ENCODE measurements at regions of chr22 and their contacts with region 1.

Region 1: GRCh38 chr22:37472418-37473006 is 13.7 kb downstream of the MFNG start:
- DNase-seq: peak; percentile 48
- ATAC-seq: no peak
- H3K4me3 Mint-ChIP-seq: no peak overlapping the region
- H3K27ac Mint-ChIP-seq: peak overlapping the region; percentile 42
- H3K4me1 Mint-ChIP-seq: peaks cover 5% of the 10 kb centered on the region
- H3K27me3 Mint-ChIP-seq: no peaks in the 10 kb centered on the region
- CTCF ChIP-seq: peak; percentile 70

Region 2: GRCh38 chr22:37353839-37354238 is 118.7 kb before region 1 on chr22:
- CTCF ChIA-PET with region 1: no interaction called
- POLR2A ChIA-PET with region 1: no interaction called
- intact Hi-C with region 1: no loop called
- DNase-seq: no peak
- ATAC-seq: no peak
- H3K4me3 Mint-ChIP-seq: no peak overlapping the region
- H3K27ac Mint-ChIP-seq: no peak overlapping the region
- H3K4me1 Mint-ChIP-seq: no peaks in the 10 kb centered on the region
- H3K27me3 Mint-ChIP-seq: no peaks in the 10 kb centered on the region
- CTCF ChIP-seq: no peak

Region 3: GRCh38 chr22:37486224-37486845 is 13.8 kb after region 1 on chr22 and contains the start of gene MFNG:
- CTCF ChIA-PET with region 1: interaction called, 20 read pairs
- POLR2A ChIA-PET with region 1: interaction called, 13 read pairs
- intact Hi-C with region 1: no loop called
- DNase-seq: peak; percentile 87
- ATAC-seq: peak; percentile 76
- H3K4me3 Mint-ChIP-seq: peak within 1 kb of the TSS; percentile 93
- H3K27ac Mint-ChIP-seq: peak within 1 kb of the TSS; percentile 97
- H3K4me1 Mint-ChIP-seq: peaks cover 51% of the 10 kb centered on the region
- H3K27me3 Mint-ChIP-seq: no peaks in the 10 kb centered on the region
- CTCF ChIP-seq: no peak
- total RNA-seq, gene MFNG: 155 to 160 TPM

Measured in activated CD8-positive, alpha-beta T cell treated with anti-CD3 and anti-CD28 coated beads for 36 hours (primary cell).